ENCODE measurements at regions of chr11 and their contacts with region 1.

Region 1: DNA sequence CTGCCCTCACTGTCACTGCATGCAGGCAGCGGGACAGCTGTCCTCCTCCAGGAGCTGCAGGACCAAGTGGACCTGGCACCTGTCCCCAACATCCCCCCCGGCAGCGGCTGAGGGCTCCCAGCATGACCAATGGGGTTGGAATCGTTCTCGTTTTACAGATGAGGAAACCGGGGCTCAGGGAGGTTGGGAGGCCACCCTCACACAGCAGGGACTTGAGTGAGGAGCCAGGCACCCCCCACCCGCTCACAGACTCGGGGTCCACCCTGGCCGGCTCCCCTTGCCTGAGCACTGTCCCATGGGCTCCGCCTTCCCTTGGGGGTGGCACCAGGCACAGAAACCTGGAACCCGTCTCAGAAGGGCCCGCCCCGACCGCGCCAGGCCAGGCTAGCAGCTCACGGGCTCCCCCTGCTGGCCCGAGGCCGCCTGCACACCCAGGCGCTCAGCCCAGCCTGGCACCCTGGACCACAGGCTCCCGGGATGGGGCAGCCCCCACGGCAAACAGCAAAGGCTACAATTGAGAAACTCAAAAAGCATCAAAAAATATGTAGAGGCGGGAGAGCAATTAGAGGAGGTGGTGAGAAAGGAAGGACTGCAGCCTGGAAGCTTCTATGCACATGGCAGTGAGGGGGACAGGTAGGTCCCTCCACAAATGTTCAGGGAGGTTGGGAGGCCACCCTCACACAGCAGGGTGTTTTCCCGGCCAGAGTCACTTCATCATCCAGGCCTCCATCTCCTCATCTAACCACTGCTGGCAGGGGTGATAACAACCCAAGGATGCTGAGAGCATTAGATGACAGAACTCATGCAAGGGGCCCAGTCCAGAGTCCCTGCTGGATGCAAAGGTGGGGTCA is 12.8 kb downstream of the MACROD1 start:
- DNase-seq: peak; percentile 91

Region 2: DNA sequence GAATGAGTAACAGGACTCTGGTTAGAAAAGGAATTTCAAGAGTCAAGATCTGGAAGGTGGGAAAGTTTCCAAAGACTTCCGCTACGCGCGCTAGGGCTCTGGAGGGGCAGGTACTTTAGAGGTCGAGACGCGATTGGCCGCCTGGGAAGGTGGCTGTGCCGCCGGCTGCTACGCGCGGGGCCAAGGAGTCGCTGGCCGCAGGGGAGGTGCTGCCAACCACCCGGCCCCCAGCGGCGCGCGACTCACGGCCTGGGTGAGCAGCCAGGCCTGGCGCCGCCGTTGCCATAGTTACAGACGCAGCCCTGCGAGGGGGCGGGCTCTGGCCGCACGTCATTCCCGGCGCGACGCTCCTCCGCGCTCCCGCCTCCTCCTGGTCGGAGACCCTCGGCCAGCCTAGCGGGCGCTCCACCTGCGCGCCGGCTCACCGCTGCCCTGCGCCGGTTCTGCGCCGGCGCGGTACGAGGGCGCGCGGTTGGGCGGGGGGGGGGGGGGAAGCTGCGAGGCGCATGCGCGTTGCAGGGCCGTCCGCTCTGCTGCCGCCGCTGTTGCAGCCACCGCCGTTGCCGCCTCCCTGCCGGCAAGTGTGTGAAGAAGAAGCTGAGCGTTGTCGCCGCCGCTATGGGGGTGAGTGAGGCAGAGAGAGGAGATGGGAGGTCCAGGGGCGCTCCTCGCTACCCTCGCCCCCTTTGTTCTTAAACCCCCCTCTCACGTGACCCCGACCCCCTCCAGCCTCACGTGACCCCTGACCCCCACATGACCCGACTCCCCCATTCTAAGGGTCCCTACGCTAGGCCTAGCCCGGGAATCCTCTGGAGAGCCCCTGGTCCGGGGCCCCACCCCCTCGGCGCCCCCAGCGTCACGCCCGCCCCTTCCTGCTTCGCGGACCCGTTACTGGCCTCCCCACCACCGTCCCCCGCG is 214.3 kb before region 1 on chr11 and contains the start of gene NAA40:
- intact Hi-C with region 1: no loop called
- DNase-seq: peak; percentile 92
- total RNA-seq, gene NAA40: 19.2 TPM

Region 3: GRCh38 chr11:64000026-64000739 is 152.9 kb before region 1 on chr11:
- intact Hi-C with region 1: loop called (anchors 1 kb)
- DNase-seq: no peak

Region 4: DNA sequence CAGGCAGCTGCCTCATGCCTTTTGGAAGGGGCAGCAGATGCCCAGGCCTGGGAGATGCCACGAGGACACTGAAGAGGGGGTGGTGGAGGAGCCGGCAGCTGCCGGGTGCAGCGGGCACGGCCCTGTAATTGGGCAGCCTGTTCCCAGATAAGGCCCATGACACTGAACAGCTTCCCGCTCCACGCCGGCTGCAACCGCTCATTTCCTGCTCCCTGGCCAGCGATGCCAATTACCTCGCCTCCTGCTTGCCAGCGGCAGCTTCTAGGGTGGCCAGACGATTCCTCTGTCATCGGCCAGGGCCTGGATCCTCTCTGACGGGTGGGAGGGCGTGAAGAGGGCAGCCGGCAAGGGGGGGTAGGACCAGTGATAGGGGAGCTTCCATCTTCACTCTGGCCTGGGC is 94.6 kb before region 1 on chr11:
- intact Hi-C with region 1: loop called (anchors 2 kb)
- DNase-seq: peak; percentile 88

Region 5: GRCh38 chr11:64120951-64121569 is 32.0 kb before region 1 on chr11:
- intact Hi-C with region 1: no loop called
- DNase-seq: no peak

Measured in cardiac septum (tissue), 1 donor.